Panc1 (cell line): ENCODE measurements at regions of chr19 and their contacts with region 1.

Region 1: DNA sequence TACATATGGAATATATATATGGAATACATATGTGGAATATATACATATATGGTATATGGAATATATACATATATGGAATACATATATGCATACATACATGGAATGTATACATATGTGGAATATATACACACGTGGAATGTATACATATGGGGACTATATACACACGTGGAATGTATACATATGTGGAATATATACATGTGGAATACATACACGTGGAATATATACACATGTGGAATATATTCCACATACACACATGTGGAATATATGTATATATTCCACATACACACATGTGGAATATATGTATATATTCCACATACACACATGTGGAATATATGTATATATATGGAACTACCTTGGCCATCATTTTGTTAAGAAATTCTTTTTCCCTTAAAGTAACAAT is 31.1 kb downstream of the ZNF571 start:
- DNase-seq: no peak
- ATAC-seq: no peak
- H3K4me3 ChIP-seq: no peak overlapping the region
- H3K27ac ChIP-seq: no peak overlapping the region
- H3K4me1 ChIP-seq: no peaks in the 10 kb centered on the region
- H3K27me3 ChIP-seq: no peaks in the 10 kb centered on the region
- CTCF ChIP-seq: no peak

Region 2: GRCh38 chr19:37594304-37594981 is 30.9 kb after region 1 on chr19 and contains the starts of genes ZNF540 and ZNF571:
- CTCF ChIA-PET with region 1: no interaction called
- POLR2A ChIA-PET with region 1: no interaction called
- in situ Hi-C with region 1: no loop called
- intact Hi-C with region 1: loop called (anchors 1 kb)
- DNase-seq: peak; percentile 85
- ATAC-seq: peak; percentile 99
- H3K4me3 ChIP-seq: peak within 1 kb of the TSS; percentile 78 to 96
- H3K27ac ChIP-seq: peak within 1 kb of the TSS; percentile 81
- H3K4me1 ChIP-seq: no peaks in the 10 kb centered on the region
- H3K27me3 ChIP-seq: no peaks in the 10 kb centered on the region
- CTCF ChIP-seq: no peak
- total RNA-seq, gene ZNF540: 0.39 TPM
- total RNA-seq, gene ZNF571: 6.2 TPM